ENCODE measurements at regions of chr6 and their contacts with region 1.

Region 1: DNA sequence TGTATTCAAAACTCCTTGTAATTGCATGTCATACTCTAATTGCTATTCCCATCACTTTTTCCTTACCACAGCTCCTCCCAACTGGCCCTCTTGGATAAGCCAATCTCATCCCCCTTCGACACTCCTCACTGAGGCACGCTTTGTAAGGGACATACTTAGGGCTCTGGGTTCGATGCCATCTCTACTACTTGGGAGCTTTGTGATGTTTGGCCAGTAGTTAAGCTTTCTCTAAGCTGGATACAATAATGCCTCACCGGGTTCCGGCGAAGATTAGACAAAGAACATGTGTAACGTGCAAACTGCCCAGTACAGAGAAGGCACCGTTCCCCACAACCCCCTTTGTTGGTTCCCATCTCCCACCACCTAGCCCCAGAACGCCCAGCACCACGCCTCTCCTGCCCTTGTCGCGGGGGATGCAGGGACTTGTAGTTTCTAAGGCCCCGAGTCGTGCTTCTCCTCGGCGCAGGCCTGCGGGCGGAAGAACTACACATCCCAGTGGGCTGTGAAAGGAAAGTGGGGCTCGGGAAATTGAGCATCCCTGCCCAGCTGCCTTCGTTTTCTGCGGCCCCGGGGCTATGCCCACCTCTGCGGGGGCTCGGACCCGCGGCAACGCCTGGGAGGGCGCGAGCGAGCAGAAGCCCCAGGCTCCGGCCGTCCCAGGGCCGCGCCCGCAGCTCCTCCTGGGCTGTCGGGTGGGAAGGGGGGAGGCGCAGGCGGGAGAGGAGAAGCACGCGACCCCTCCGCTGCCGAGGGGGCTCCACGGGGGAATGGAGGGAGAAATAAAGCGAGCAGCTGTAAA is 1.1 kb upstream of the ZDHHC14 start:
- DNase-seq: peak; percentile 91
- H3K4me3 ChIP-seq: peak overlapping the region; percentile 99
- H3K27ac ChIP-seq: peak overlapping the region; percentile 95
- H3K4me1 ChIP-seq: peaks cover 36% of the 10 kb centered on the region
- H3K27me3 ChIP-seq: no peaks in the 10 kb centered on the region
- CTCF ChIP-seq: no peak

Region 2: DNA sequence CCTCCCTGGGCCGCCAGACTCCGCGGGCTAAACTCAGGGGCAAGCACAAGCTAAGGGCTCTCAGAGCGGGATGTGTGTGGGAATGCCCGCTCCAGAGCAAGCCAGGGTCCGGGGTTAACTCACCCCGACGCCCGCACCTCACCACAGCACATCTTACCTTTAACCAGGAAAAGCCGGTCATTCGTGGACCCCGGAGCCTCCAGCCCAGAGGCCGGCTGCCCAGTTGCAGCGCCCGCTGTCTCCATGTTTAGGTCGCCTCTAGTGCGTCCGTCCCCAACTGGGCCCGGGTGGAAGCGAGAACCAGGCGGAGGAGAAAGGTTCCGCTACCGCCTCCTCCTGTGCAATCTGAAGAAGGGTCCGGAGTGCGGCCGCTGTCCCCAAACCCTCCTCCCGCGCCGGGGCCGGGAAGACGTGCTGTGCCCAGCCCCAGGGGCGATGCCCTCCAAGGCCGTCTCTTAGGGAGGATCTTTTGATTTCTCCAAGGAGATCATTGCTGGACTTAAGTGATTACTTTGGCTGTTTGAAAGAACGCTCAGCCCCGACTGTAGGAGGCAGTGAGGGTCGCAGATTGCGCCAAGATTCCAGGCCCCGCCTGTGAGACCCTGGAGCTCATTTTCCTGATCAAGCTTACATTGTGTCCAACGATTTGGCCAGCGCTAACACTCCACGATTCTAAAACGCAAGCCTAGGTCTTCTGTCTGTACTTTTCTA is 56.4 kb before region 1 on chr6 and contains the start of gene TMEM242:
- intact Hi-C with region 1: loop called (anchors 10 kb)
- DNase-seq: peak; percentile 92
- H3K4me3 ChIP-seq: peak within 1 kb of the TSS; percentile 76
- H3K27ac ChIP-seq: peak within 1 kb of the TSS; percentile 97
- H3K4me1 ChIP-seq: peaks cover 61% of the 10 kb centered on the region
- H3K27me3 ChIP-seq: no peaks in the 10 kb centered on the region
- CTCF ChIP-seq: peak; percentile 52
- total RNA-seq, gene TMEM242: 19.8 TPM

Region 3: DNA sequence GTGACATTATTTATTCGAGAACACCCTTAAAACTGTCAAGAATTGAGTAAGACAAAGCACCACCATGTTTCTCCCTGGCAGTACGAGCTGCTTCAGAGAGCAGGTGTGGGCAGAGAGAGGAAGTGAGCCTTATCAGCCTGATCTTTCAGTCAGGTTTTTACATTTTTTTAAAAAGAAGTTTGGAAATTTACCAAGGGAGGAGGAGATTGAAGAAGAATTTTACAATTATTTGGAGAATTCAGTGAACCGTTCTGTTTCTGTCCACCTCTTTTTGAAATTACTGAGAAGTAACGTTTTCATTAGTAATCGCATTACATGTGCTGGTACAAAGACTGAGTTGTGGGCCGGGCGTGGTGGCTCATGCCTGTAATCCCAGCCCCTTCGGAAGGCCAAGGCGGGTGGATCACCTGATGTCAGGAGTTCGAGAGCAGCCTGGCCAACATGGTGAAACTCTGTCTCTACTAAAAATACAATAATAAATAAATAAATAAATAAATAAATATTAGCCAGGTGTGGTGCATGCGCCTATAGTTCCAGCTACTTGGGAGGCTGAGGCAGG is 76.7 kb after region 1 on chr6:
- intact Hi-C with region 1: no loop called
- DNase-seq: no peak
- H3K4me3 ChIP-seq: no peak overlapping the region
- H3K27ac ChIP-seq: peak overlapping the region; percentile 37
- H3K4me1 ChIP-seq: peaks cover 39% of the 10 kb centered on the region
- H3K27me3 ChIP-seq: no peaks in the 10 kb centered on the region
- CTCF ChIP-seq: no peak

Region 4: GRCh38 chr6:157469385-157469877 is 89.6 kb after region 1 on chr6:
- intact Hi-C with region 1: no loop called
- DNase-seq: no peak
- H3K4me3 ChIP-seq: no peak overlapping the region
- H3K27ac ChIP-seq: no peak overlapping the region
- H3K4me1 ChIP-seq: peaks cover 6% of the 10 kb centered on the region
- H3K27me3 ChIP-seq: no peaks in the 10 kb centered on the region
- CTCF ChIP-seq: no peak

Region 5: GRCh38 chr6:157571269-157571668 is 191.4 kb after region 1 on chr6:
- intact Hi-C with region 1: loop called (anchors 10 kb)
- DNase-seq: no peak
- H3K4me3 ChIP-seq: no peak overlapping the region
- H3K27ac ChIP-seq: no peak overlapping the region
- H3K4me1 ChIP-seq: peaks cover 5% of the 10 kb centered on the region
- H3K27me3 ChIP-seq: no peaks in the 10 kb centered on the region
- CTCF ChIP-seq: no peak

Measured in left ventricle myocardium inferior (tissue), 1 donor.